Naive thymus-derived CD4-positive, alpha-beta T cell (primary cell): ENCODE measurements at regions of chr14 and their contacts with region 1.

Region 1: DNA sequence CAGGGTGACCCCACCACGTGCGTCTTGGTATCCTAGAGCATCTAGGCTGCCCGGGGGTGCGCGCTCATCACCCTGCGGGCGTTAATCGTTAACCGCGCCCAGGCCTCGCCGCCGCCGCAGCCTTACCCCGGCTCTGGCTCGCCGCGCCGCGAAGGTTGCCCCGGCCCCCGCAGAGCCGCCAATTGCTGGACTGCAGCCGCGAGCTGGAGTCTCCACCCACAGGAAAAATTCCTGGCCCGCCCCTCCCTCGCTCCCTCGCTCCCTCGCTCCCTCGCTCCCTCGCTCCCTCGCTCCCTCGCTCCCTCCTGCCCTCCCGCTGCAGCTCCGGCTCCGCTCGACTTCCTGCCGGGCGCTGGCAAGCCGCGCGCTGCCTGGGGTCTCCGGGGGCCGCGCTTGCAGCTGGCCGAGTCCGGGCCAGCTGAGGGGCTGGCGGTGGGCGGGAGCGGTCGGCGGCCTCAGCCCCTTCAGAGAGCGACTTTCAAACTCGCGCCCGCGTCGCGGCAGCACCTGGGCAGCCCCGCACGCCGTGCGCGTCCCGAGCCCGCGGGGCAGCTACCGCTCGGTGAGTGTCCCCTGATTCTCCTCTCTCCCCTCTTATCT is at the start of gene PLEKHG3:
- DNase-seq: peak in 1 of 9 donors; percentile 45
- ATAC-seq: peak; percentile 39
- H3K4me3 ChIP-seq: peak within 1 kb of the TSS; percentile 64
- H3K4me3 Mint-ChIP-seq: peak within 1 kb of the TSS; percentile 72 to 86 (median 80)
- H3K27ac ChIP-seq: no peak within 1 kb of the TSS
- H3K27ac Mint-ChIP-seq: peak within 1 kb of the TSS in 3 of 9 donors; percentile 20 to 74 (median 22)
- H3K4me1 ChIP-seq: peaks cover 27 to 44% of the 10 kb centered on the region in 2 donors
- H3K4me1 Mint-ChIP-seq: peaks cover 37 to 71% (median 46%) of the 10 kb centered on the region in 7 donors
- H3K27me3 ChIP-seq: peaks cover 3 to 14% of the 10 kb centered on the region in 2 donors
- H3K27me3 Mint-ChIP-seq: peaks cover 33 to 68% (median 59%) of the 10 kb centered on the region in 5 donors
- total RNA-seq, gene PLEKHG3: 1.2 to 43.6 (median 6.0) TPM

Region 2: GRCh38 chr14:64720131-64720576 is 15.9 kb after region 1 on chr14:
- CTCF ChIA-PET with region 1: no interaction called
- POLR2A ChIA-PET with region 1: no interaction called
- intact Hi-C with region 1: loop called (anchors 2 kb)
- DNase-seq: no peak
- ATAC-seq: peak; percentile 24
- H3K4me3 ChIP-seq: no peak overlapping the region
- H3K4me3 Mint-ChIP-seq: peak overlapping the region in 1 of 10 donors; percentile 13
- H3K27ac ChIP-seq: no peak overlapping the region
- H3K27ac Mint-ChIP-seq: peak overlapping the region in 3 of 9 donors; percentile 48 to 62 (median 56)
- H3K4me1 ChIP-seq: peaks cover 29 to 65% of the 10 kb centered on the region in 2 donors
- H3K4me1 Mint-ChIP-seq: peaks cover 35 to 88% (median 49%) of the 10 kb centered on the region in 7 donors
- H3K27me3 ChIP-seq: no peaks in the 10 kb centered on the region
- H3K27me3 Mint-ChIP-seq: peaks cover 0 to under 1% (median 0%) of the 10 kb centered on the region in 5 donors

Region 3: GRCh38 chr14:64764641-64765520 is 60.6 kb after region 1 on chr14:
- CTCF ChIA-PET with region 1: no interaction called
- POLR2A ChIA-PET with region 1: no interaction called
- intact Hi-C with region 1: loop called (anchors 2 to 5 kb)
- DNase-seq: peak; percentile 33 to 71 (median 59)
- ATAC-seq: peak; percentile 86
- H3K4me3 ChIP-seq: peak overlapping the region; percentile 39
- H3K4me3 Mint-ChIP-seq: peak overlapping the region in 9 of 10 donors; percentile 36 to 78 (median 65)
- H3K27ac ChIP-seq: no peak overlapping the region
- H3K27ac Mint-ChIP-seq: peak overlapping the region in 3 of 9 donors; percentile 48 to 62 (median 49)
- H3K4me1 ChIP-seq: peaks cover 0 to 31% of the 10 kb centered on the region in 2 donors
- H3K4me1 Mint-ChIP-seq: peaks cover 2 to 44% (median 23%) of the 10 kb centered on the region in 7 donors
- H3K27me3 ChIP-seq: no peaks in the 10 kb centered on the region
- H3K27me3 Mint-ChIP-seq: peaks cover 0 to 21% (median 0%) of the 10 kb centered on the region in 5 donors

Region 4: DNA sequence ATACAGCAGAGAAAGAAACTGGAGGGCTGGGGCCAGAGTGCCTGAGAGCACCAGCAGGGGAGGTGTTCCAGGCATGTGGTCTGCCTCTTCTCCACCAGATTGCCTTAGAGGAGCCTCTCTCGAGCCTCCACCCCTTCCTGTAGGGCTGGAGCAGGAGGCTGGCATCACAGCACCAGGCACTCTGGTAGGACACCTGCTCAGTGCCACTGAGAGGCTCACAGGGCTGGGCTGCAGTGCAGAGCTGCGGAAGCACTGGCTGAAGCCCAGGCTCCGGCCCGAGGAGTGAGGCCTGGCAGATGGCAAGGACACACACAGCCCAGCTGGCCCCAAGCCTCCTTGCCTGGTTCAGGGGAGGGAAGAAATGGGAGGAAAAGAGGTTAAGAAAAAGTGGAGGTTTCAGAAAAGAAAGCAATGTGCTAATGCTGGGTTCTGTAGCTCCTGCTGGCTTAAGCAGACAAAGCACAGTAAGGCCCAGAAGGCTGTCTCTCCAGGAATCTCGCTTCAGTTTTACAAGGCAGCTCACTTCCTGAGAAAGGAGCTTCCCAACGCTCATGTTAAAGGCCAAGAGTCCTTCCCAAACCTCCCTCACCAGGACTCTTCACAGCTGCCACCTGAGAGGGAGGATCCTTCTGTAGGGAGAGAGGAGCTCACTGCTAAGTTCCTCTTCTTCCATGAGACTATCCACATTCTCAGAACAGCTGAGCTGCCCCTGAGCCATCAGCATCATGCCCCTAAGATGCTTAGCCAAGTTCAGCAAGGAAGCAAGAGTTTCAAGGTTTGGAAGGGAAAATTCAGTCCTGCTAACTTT is 151.7 kb after region 1 on chr14:
- CTCF ChIA-PET with region 1: no interaction called
- POLR2A ChIA-PET with region 1: no interaction called
- intact Hi-C with region 1: no loop called
- DNase-seq: no peak
- ATAC-seq: no peak
- H3K4me3 ChIP-seq: no peak overlapping the region
- H3K4me3 Mint-ChIP-seq: no peak overlapping the region
- H3K27ac ChIP-seq: no peak overlapping the region
- H3K27ac Mint-ChIP-seq: no peak overlapping the region
- H3K4me1 ChIP-seq: no peaks in the 10 kb centered on the region
- H3K4me1 Mint-ChIP-seq: peaks cover 0 to 1% (median 0%) of the 10 kb centered on the region in 7 donors
- H3K27me3 ChIP-seq: no peaks in the 10 kb centered on the region
- H3K27me3 Mint-ChIP-seq: peaks cover 5 to 39% (median 24%) of the 10 kb centered on the region in 5 donors